ENCODE measurements at regions of chr1 and their contacts with region 1.

Region 1: DNA sequence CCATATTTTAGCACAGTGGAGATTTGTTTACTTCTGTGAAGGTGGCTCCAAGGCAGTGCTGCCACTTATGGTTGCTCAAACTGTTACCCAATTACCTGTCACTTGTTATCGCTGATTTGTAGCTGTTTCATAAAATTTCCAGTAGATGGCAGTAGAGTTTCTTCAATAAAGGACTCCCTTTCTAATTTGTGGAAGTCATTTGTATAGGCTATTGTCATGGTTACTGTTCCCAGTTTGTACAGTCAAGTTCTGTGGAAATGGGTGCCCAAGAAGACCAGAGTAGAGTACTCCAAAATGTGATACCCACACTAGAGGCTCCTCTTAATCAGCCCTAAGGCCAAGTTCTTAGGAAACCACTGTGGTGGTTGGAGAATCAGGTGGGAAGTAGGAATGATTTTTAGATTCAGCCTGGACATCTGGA is 186.1 kb downstream of the CLEC20A start:
- DNase-seq: peak in 5 of 9 donors; percentile 13 to 42 (median 22)
- ATAC-seq: peak; percentile 69
- H3K4me3 ChIP-seq: no peak overlapping the region
- H3K4me3 Mint-ChIP-seq: no peak overlapping the region
- H3K27ac ChIP-seq: no peak overlapping the region
- H3K27ac Mint-ChIP-seq: no peak overlapping the region
- H3K4me1 ChIP-seq: no peaks in the 10 kb centered on the region
- H3K4me1 Mint-ChIP-seq: no peaks in the 10 kb centered on the region
- H3K27me3 ChIP-seq: no peaks in the 10 kb centered on the region
- H3K27me3 Mint-ChIP-seq: peaks cover 0 to 16% (median 8%) of the 10 kb centered on the region in 5 donors

Region 2: GRCh38 chr1:178300352-178300699 is 10.4 kb before region 1 on chr1:
- CTCF ChIA-PET with region 1: interaction called, 16 read pairs
- POLR2A ChIA-PET with region 1: no interaction called
- intact Hi-C with region 1: no loop called
- DNase-seq: no peak
- ATAC-seq: no peak
- H3K4me3 ChIP-seq: no peak overlapping the region
- H3K4me3 Mint-ChIP-seq: no peak overlapping the region
- H3K27ac ChIP-seq: no peak overlapping the region
- H3K27ac Mint-ChIP-seq: no peak overlapping the region
- H3K4me1 ChIP-seq: no peaks in the 10 kb centered on the region
- H3K4me1 Mint-ChIP-seq: peaks cover 0 to 3% (median 0%) of the 10 kb centered on the region in 7 donors
- H3K27me3 ChIP-seq: no peaks in the 10 kb centered on the region
- H3K27me3 Mint-ChIP-seq: peaks cover 3 to 23% (median 16%) of the 10 kb centered on the region in 5 donors

Region 3: DNA sequence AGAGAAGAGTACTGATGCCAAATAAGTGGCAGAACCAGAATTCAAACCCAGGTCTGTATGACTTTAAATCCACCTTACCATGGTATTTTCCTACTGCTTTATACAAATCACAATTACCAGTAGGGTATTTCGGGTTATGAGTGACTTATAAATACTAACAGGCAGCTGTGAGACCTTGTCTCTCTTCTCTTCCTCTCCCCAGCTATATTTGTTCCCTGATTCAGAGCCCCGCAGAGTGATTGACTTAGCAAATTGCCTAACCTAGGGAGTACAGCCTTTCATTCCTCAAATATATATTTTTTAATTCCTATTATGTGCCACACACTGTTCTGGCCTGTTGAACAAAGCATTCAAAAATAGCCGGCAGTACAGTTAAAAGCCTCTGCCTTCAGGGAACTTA is 18.0 kb after region 1 on chr1:
- CTCF ChIA-PET with region 1: no interaction called
- POLR2A ChIA-PET with region 1: no interaction called
- intact Hi-C with region 1: loop called in 1 of 2 experiments (anchors 2 kb)
- DNase-seq: no peak
- ATAC-seq: no peak
- H3K4me3 ChIP-seq: no peak overlapping the region
- H3K4me3 Mint-ChIP-seq: no peak overlapping the region
- H3K27ac ChIP-seq: no peak overlapping the region
- H3K27ac Mint-ChIP-seq: no peak overlapping the region
- H3K4me1 ChIP-seq: no peaks in the 10 kb centered on the region
- H3K4me1 Mint-ChIP-seq: no peaks in the 10 kb centered on the region
- H3K27me3 ChIP-seq: no peaks in the 10 kb centered on the region
- H3K27me3 Mint-ChIP-seq: peaks cover 0 to 11% (median 4%) of the 10 kb centered on the region in 5 donors

Region 4: GRCh38 chr1:178501705-178502329 is 191.1 kb after region 1 on chr1:
- CTCF ChIA-PET with region 1: no interaction called
- POLR2A ChIA-PET with region 1: no interaction called
- intact Hi-C with region 1: loop called in 1 of 2 experiments (anchors 5 kb)
- DNase-seq: peak in 6 of 9 donors; percentile 4 to 62 (median 22)
- ATAC-seq: peak; percentile 76
- H3K4me3 ChIP-seq: no peak overlapping the region
- H3K4me3 Mint-ChIP-seq: no peak overlapping the region
- H3K27ac ChIP-seq: no peak overlapping the region
- H3K27ac Mint-ChIP-seq: no peak overlapping the region
- H3K4me1 ChIP-seq: no peaks in the 10 kb centered on the region
- H3K4me1 Mint-ChIP-seq: no peaks in the 10 kb centered on the region
- H3K27me3 ChIP-seq: no peaks in the 10 kb centered on the region
- H3K27me3 Mint-ChIP-seq: peaks cover 0 to 8% (median 4%) of the 10 kb centered on the region in 5 donors

Region 5: DNA sequence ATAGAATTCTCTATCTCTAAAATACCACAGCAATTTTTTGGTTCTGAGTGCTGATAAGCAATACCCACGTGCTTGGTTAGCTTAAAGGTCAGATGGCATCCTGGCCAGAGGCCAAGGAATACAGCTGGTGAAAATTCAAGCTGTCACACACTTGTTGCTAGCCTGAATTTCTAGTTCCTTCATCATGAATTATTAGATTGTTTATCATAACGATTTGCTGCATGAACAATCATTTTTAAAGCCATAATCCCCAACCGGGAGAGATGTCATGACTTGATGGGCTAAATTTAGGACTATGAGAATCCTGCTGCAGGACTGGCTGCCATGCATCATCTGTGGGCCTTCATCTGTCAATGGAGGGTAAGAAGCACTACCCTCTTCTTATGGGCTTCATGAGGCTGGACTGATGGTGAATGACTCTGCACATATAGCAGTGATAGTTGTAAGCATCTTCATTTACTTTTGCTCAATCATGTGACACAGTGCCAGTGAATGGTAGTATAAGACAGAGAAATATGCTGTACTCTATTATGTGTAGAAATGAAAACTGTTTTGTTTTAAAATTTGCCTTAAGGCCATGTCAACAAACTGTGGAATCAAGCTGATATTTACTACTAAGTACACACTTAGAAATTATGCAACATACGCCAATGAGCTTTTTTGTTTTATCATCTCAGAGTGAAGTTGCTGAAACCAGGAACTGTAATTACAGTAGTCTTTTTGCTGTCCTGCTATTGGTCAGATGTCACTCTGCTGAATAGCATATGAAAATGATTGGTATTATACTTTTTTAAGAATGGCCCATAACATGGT is 333.8 kb after region 1 on chr1:
- CTCF ChIA-PET with region 1: no interaction called
- POLR2A ChIA-PET with region 1: no interaction called
- intact Hi-C with region 1: no loop called
- DNase-seq: no peak
- ATAC-seq: no peak
- H3K4me3 ChIP-seq: no peak overlapping the region
- H3K4me3 Mint-ChIP-seq: no peak overlapping the region
- H3K27ac ChIP-seq: no peak overlapping the region
- H3K27ac Mint-ChIP-seq: no peak overlapping the region
- H3K4me1 ChIP-seq: no peaks in the 10 kb centered on the region
- H3K4me1 Mint-ChIP-seq: no peaks in the 10 kb centered on the region
- H3K27me3 ChIP-seq: no peaks in the 10 kb centered on the region
- H3K27me3 Mint-ChIP-seq: peaks cover 2 to 17% (median 9%) of the 10 kb centered on the region in 5 donors

Measured in naive thymus-derived CD4-positive, alpha-beta T cell (primary cell).